Activated naive CD4-positive, alpha-beta T cell treated with anti-CD3 and anti-CD28 coated beads for 36 hours (primary cell): ENCODE measurements at regions of chr2 and their contacts with region 1.

Region 1: DNA sequence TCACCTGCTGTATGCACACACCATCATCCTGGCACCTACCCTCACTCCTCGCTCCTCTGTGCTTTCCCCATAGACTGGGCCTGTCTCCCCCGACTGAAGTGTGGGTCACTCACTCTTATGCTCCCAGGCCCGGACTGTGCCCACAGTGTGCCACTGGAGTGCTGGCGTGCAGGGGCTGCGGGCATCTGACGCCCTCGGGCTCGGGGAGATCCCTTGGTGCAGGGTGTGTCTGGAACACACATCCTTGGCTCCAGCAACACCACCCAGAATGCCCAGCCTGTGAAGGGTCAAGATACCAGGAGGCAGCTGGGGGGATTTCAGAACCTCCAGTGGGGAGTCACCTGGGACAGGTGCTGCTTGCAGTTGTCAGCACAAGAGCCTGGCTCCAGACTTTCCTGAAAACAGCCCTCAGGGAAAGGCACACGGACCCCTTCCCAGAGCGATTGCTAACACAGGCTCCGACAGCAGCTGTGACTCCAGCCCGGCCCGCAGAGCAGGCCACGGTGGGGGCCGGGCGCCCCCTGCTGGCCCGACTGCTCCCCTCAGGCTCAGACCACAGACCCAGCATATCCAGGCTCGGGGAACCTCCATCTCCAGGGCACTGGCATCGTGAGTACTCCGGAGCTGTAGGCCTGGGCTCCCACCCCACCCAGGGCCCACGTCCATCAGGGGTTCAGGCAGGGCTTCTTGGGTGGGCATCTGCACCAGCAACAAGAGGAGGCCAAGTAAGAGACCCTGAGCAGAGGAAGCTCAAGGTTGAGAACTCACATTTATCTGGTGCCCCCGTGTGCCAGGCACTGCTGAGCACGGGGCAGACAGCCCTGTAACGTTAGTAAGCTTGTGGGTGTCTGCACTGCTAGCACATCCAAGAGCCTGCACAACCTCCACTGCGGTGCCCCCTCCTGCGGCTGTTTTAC is 8.6 kb downstream of the HS1BP3 start:
- DNase-seq: peak; percentile 73
- H3K4me3 Mint-ChIP-seq: no peak overlapping the region
- H3K27ac Mint-ChIP-seq: no peak overlapping the region
- H3K4me1 Mint-ChIP-seq: no peaks in the 10 kb centered on the region
- H3K27me3 Mint-ChIP-seq: no peaks in the 10 kb centered on the region

Region 2: GRCh38 chr2:19955544-19956422 is 686.5 kb before region 1 on chr2:
- CTCF ChIA-PET with region 1: no interaction called
- intact Hi-C with region 1: loop called (anchors 2 kb)
- DNase-seq: peak; percentile 68
- H3K4me3 Mint-ChIP-seq: no peak overlapping the region
- H3K27ac Mint-ChIP-seq: no peak overlapping the region
- H3K4me1 Mint-ChIP-seq: no peaks in the 10 kb centered on the region
- H3K27me3 Mint-ChIP-seq: no peaks in the 10 kb centered on the region

Region 3: DNA sequence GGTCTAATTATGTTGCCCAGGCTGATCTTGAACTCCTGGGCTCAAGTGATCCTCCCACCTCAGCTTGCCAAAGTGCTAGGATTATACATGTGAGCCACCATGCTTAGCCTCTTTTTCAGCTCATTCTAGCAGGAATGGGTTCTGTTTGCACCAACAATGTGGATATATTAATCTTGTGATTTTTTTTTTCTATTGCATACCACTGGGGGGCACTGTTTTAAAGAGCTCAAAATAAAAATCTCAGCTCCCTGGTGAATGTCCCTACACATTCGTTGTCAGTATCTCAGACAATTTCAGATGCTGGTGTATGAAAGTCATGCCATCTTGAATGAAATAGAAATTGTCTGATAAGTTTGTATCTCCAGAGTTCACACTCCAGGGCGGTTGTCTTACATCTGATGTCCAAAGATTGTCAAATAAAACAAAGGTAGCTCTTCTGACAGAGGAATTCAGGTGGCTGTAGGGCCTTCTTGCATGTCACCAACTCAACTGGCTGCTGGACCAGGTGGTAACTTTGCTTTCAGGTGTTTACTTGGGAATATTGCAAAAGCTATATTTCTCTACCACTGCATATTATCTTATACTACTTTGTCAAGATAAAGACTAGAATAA is 626.7 kb before region 1 on chr2:
- CTCF ChIA-PET with region 1: no interaction called
- intact Hi-C with region 1: loop called (anchors 10 kb)
- DNase-seq: no peak
- H3K4me3 Mint-ChIP-seq: no peak overlapping the region
- H3K27ac Mint-ChIP-seq: no peak overlapping the region
- H3K4me1 Mint-ChIP-seq: peaks cover 8% of the 10 kb centered on the region
- H3K27me3 Mint-ChIP-seq: peaks cover 28% of the 10 kb centered on the region

Region 4: GRCh38 chr2:20242060-20243006 is 400.0 kb before region 1 on chr2:
- CTCF ChIA-PET with region 1: interaction called, 4 read pairs
- intact Hi-C with region 1: loop called (anchors 5 kb)
- DNase-seq: peak; percentile 50
- H3K4me3 Mint-ChIP-seq: peak overlapping the region; percentile 50
- H3K27ac Mint-ChIP-seq: no peak overlapping the region
- H3K4me1 Mint-ChIP-seq: peaks cover 7% of the 10 kb centered on the region
- H3K27me3 Mint-ChIP-seq: no peaks in the 10 kb centered on the region

Region 5: GRCh38 chr2:20411361-20411894 is 230.9 kb before region 1 on chr2:
- CTCF ChIA-PET with region 1: interaction called, 47 read pairs
- intact Hi-C with region 1: loop called (anchors 1 kb)
- DNase-seq: peak; percentile 84
- H3K4me3 Mint-ChIP-seq: no peak overlapping the region
- H3K27ac Mint-ChIP-seq: no peak overlapping the region
- H3K4me1 Mint-ChIP-seq: no peaks in the 10 kb centered on the region
- H3K27me3 Mint-ChIP-seq: peaks cover 2% of the 10 kb centered on the region

Region 6: GRCh38 chr2:20438334-20439192 is 203.8 kb before region 1 on chr2:
- CTCF ChIA-PET with region 1: interaction called, 63 read pairs
- intact Hi-C with region 1: loop called (anchors 1 kb)
- DNase-seq: no peak
- H3K4me3 Mint-ChIP-seq: no peak overlapping the region
- H3K27ac Mint-ChIP-seq: no peak overlapping the region
- H3K4me1 Mint-ChIP-seq: no peaks in the 10 kb centered on the region
- H3K27me3 Mint-ChIP-seq: peaks cover 2% of the 10 kb centered on the region

Region 7: DNA sequence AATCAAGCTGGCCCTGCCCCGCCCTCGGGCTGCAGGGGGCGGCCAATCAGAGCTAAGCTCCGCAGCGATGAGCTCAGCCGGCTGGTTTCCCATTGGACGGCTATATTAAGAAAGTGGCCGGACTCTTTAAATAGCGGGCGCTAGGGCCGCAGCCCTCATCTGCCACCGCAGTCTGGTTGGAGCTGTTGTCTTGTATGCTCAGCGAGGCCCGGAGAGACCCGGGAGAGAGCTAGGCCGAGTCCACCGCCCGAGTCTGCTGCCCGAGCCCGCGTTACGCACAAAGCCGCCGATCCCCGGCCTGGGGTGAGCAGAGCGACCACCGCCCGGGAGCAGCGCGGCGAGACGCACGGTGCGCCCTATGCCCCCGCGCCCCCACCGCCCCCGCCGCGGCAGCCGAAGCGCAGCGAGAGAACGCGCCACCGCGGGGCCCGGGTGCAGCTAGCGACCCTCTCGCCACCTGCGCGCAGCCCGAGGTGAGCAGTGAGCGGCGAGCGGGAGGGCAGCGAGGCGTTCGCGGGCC is 195.3 kb before region 1 on chr2 and contains the start of gene RHOB:
- CTCF ChIA-PET with region 1: interaction called, 63 read pairs
- intact Hi-C with region 1: loop called (anchors 1 kb)
- DNase-seq: peak; percentile 91
- H3K4me3 Mint-ChIP-seq: peak within 1 kb of the TSS; percentile 76
- H3K27ac Mint-ChIP-seq: no peak within 1 kb of the TSS
- H3K4me1 Mint-ChIP-seq: peaks cover 11% of the 10 kb centered on the region
- H3K27me3 Mint-ChIP-seq: peaks cover 3% of the 10 kb centered on the region
- total RNA-seq, gene RHOB: 1.8 to 2.0 TPM

Region 8: GRCh38 chr2:20796374-20796791 is 154.1 kb after region 1 on chr2:
- CTCF ChIA-PET with region 1: no interaction called
- intact Hi-C with region 1: no loop called
- DNase-seq: no peak
- H3K4me3 Mint-ChIP-seq: no peak overlapping the region
- H3K27ac Mint-ChIP-seq: no peak overlapping the region
- H3K4me1 Mint-ChIP-seq: peaks cover 17% of the 10 kb centered on the region
- H3K27me3 Mint-ChIP-seq: no peaks in the 10 kb centered on the region